ENCODE measurements at regions of chr3 and their contacts with region 1.

Region 1: GRCh38 chr3:171566803-171567422 is 106.7 kb upstream of the TNIK start:
- DNase-seq: no peak
- ATAC-seq: peak; percentile 64
- H3K4me3 Mint-ChIP-seq: no peak overlapping the region
- H3K27ac Mint-ChIP-seq: no peak overlapping the region
- H3K4me1 Mint-ChIP-seq: peaks cover 4% of the 10 kb centered on the region
- H3K27me3 Mint-ChIP-seq: peaks cover 2% of the 10 kb centered on the region
- CTCF ChIP-seq: peak; percentile 84

Region 2: DNA sequence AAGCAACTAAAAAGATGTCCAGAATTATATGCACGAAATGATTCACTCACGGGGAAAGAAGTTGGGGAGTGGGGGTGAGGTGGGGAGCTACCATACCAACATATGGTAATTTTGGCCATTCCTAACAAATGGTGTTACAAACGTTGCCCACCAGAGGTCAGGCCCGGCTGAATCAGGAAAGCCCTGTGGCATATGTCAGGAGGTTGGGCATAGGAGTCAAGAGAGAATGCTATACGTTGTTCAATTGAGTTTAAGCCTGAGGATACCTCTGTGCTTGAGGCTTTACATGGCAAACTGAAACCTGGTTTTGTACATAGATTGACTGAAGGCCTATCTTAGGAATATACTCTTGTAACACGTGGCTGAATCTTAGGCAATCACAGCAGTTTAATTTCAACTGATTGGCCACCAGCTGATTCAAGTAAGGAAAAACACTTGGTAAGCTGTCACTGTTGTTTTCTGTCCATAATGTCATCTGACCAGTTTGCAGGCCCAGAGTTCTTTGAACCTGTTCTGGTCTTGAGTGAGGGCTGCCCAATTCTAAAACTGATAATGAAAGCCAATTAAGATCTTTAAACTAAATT is 517.0 kb before region 1 on chr3:
- CTCF ChIA-PET with region 1: interaction called, 5 read pairs
- POLR2A ChIA-PET with region 1: no interaction called
- intact Hi-C with region 1: loop called (anchors 5 kb)
- DNase-seq: peak; percentile 67
- ATAC-seq: peak; percentile 89
- H3K4me3 Mint-ChIP-seq: no peak overlapping the region
- H3K27ac Mint-ChIP-seq: no peak overlapping the region
- H3K4me1 Mint-ChIP-seq: no peaks in the 10 kb centered on the region
- H3K27me3 Mint-ChIP-seq: peaks cover 21% of the 10 kb centered on the region
- CTCF ChIP-seq: peak; percentile 40

Region 3: DNA sequence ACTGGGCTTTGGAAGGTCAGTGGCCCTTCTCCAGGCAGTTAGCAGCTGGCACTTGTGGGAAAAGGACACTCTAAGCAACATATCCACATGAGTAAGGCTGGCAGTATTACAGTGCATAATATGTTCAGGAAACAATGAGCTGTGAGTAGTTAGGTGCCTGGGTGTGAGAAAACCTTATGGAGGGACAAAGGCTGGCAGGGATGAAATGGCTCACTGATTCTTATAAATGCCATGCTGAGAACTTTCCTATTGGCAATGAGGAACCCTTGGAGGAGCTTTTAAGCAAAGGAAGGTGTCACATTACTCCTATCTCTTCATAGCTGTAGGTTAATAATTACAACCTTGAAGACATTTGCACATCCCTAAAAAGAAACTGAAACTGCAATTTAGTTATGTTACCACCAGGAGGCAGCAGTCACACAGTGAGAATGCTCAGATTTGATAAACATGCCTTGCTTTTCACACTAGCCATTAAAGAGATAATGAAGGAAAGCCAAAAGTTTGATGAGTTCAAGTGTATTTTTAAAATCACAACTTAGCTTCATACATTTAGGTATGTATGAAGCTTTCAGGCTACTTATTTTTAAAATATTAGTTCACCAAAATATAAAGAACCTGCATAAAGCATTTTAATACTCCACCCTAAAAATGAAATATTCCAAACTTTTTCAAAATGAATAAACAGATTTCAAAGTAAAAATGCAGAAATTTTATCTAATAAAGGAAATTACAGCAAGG is 403.8 kb before region 1 on chr3:
- CTCF ChIA-PET with region 1: interaction called, 37 read pairs
- POLR2A ChIA-PET with region 1: no interaction called
- intact Hi-C with region 1: loop called (anchors 2 kb)
- DNase-seq: peak; percentile 20
- ATAC-seq: peak; percentile 42
- H3K4me3 Mint-ChIP-seq: no peak overlapping the region
- H3K27ac Mint-ChIP-seq: no peak overlapping the region
- H3K4me1 Mint-ChIP-seq: peaks cover 25% of the 10 kb centered on the region
- H3K27me3 Mint-ChIP-seq: no peaks in the 10 kb centered on the region
- CTCF ChIP-seq: peak; percentile 93

Region 4: GRCh38 chr3:171257251-171258203 is 309.4 kb before region 1 on chr3:
- CTCF ChIA-PET with region 1: no interaction called
- POLR2A ChIA-PET with region 1: no interaction called
- intact Hi-C with region 1: loop called (anchors 10 kb)
- DNase-seq: no peak
- ATAC-seq: peak; percentile 24
- H3K4me3 Mint-ChIP-seq: no peak overlapping the region
- H3K27ac Mint-ChIP-seq: peak overlapping the region; percentile 91
- H3K4me1 Mint-ChIP-seq: peaks cover 84% of the 10 kb centered on the region
- H3K27me3 Mint-ChIP-seq: no peaks in the 10 kb centered on the region
- CTCF ChIP-seq: no peak

Region 5: DNA sequence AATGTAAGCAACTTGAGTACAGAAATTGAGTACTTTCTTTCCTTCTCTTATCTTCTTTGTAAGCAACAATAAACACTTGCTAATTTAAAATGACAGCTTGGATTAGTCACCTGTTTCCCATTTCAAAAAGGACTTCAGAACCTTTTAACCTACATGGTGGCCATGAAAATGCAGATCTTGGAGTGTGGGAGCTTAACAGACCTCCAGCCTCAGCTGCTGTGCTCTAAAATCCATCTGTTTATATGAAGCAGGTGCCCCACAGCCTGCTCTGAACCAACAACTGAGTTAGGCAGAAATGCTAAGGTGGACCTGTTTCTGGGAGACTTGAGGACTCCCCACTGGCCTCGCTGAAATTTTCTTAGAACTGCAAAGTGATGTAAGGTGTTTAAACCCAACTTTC is 15.6 kb before region 1 on chr3:
- CTCF ChIA-PET with region 1: no interaction called
- POLR2A ChIA-PET with region 1: no interaction called
- intact Hi-C with region 1: no loop called
- DNase-seq: no peak
- ATAC-seq: no peak
- H3K4me3 Mint-ChIP-seq: no peak overlapping the region
- H3K27ac Mint-ChIP-seq: no peak overlapping the region
- H3K4me1 Mint-ChIP-seq: no peaks in the 10 kb centered on the region
- H3K27me3 Mint-ChIP-seq: no peaks in the 10 kb centered on the region
- CTCF ChIP-seq: no peak